ENCODE measurements at regions of chr20 and their contacts with region 1.

Region 1: GRCh38 chr20:23349338-23350195 is 1.0 kb upstream of the NXT1 start:
- DNase-seq: no peak

Region 2: DNA sequence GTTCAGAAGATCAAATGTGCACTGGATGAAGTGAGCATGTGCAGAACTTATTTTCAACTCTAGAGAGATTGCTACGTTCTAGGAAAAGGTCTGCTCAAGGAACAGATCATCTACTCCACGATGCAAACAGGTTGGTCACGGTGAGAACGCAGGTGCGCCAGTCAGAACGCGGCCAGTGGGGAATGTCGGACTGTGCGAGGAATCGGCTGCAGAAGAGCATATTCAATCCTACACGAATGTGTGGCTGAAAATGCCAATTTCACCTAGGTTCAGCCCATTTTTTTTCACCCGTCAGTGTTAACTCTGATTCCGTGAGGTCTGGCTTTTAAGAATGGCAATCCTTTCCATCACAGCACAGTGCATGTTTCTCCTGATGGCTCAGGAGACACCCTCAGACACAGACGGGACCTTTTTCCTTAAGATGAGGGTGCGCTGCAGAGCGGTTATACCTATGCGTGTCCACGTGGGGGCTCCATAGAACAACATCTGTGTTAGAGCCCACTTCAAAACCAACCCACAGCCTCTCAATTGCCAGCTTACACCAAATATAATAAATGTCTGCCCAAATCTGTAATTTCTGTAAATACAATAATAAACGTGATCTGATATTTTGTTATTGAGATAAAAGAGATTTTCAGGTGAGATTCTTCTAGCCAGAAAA is 1015.6 kb before region 1 on chr20:
- in situ Hi-C with region 1: loop called (anchors 25 kb)
- DNase-seq: peak; percentile 63

Region 3: DNA sequence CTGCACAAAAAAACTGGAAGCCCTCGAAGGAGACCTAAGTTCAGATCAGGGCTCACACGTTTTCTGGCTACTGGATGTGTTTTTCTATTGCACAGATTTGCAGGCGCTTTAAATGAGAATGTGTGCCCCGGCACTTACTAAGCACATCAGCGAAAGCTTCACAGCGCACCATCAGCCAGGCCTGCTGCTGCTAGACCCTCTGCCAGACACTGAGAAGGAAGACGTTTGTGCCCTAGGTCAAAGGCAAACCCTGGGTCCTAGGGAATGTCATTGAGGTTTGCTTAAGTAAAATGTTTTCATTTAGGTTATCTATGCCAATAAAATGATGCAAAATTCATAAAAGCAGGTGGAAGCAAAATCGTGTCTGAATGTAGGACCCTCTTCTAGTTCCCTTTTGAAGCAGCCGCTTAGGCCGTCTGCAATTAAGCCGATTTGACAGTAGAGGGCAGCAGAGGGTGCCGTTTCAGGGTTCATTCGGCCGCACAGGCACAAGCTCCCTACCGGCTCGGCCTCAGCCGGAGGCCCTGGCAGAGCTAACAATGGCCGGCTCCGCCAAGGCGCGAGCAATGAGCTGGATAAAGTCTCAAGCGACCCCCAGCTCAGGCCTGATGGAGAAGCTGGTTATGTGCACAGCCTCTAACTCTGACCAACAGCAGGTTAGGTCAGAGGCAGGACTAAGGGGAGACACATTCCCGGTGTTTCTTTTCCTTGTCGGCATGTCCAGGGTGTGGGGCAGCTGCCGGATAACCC is 658.0 kb before region 1 on chr20:
- in situ Hi-C with region 1: loop called (anchors 25 kb)
- DNase-seq: peak; percentile 80

Region 4: DNA sequence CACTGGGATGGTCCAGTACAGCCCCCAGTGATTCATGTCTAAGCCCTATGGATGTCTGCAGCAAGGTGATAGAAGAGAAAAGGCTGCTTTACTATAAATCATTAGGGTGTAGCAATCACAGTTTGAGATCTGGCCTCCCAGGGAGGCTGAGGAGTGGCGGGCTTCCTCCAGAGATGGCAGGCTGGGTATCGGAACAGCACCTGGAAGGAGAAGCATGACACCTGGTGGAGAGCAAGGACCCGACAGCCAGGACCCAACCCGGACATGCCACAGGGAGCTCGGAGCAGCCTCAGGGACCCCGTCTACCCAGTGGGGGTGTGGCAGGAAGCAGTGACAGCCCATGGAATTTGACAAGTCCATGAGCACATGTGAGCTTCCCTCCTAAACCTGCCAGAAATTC is 148.6 kb before region 1 on chr20:
- in situ Hi-C with region 1: loop called (anchors 25 kb)
- DNase-seq: peak; percentile 40

Region 5: DNA sequence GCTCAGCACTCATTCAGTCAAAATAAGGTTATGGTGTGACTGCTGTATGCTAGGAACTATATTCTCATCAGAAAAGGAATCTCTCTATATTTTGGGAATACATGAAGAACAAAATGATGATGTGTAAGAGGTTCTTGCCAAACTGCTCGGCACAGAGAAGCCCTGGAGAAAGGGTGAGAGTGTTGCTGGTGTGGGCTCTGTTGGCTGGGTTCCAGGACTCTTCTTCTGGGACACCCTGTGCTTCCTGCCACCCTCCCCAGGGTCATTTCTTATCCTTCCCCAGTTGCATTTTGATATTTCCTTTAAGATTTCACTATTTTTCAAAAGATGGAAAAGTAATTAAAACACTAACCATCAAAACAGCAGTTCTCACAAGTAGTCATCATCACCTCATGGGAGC is 372.4 kb after region 1 on chr20:
- in situ Hi-C with region 1: no loop called
- DNase-seq: no peak

Measured in KBM-7 (cell line).